ENCODE measurements at regions of chr17 and their contacts with region 1.

Region 1: DNA sequence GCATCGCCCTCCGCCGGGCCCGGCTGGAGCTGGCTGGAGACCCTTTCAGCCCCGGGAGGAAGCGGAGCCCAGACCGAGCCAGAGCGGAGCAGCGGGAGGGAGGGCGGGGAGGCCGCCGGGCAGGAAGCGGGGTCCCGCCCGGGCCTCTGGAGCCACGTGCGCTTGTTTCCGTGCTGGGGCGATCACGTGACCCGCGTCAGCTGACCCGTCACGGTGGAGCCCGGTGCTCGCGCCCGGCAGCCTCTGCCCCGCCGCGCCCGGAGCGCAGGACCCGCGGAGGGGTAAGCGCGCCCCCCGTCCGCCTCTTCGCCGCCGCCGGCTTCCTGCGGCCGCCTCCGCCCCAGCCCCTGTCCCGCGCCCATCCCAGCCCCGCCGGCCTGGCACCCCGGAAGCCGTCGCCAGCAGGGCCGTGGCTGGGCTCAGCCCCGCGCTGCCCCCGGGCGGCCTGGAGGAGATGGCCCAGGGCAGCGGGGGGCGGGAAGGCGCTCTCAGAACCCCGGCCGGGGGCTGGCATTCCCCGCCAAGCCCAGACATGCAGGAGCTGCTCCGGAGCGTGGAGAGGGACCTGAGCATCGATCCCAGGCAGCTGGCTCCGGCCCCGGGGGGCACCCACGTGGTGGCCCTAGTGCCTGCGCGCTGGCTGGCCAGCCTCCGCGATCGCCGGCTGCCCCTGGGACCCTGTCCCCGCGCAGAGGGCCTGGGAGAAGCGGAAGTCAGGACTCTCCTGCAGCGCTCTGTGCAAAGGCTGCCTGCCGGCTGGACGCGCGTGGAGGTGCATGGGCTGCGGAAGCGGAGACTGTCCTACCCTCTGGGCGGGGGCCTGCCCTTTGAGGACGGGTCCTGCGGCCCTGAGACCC is at the start of gene WDR81:
- DNase-seq: peak; percentile 91 to 94
- H3K4me3 ChIP-seq: peak within 1 kb of the TSS; percentile 11 to 63 (median 26)
- H3K27ac ChIP-seq: peak within 1 kb of the TSS; percentile 70 to 91 (median 91)
- H3K4me1 ChIP-seq: peaks cover 14 to 24% of the 10 kb centered on the region in 2 donors
- H3K27me3 ChIP-seq: no peaks in the 10 kb centered on the region
- CTCF ChIP-seq: peak in 2 of 6 experiments; percentile 5 to 11
- POLR2A ChIP-seq: peak in 1 of 2 donors; percentile 57
- total RNA-seq, gene WDR81: 25.6 to 31.0 (median 30.3) TPM

Region 2: DNA sequence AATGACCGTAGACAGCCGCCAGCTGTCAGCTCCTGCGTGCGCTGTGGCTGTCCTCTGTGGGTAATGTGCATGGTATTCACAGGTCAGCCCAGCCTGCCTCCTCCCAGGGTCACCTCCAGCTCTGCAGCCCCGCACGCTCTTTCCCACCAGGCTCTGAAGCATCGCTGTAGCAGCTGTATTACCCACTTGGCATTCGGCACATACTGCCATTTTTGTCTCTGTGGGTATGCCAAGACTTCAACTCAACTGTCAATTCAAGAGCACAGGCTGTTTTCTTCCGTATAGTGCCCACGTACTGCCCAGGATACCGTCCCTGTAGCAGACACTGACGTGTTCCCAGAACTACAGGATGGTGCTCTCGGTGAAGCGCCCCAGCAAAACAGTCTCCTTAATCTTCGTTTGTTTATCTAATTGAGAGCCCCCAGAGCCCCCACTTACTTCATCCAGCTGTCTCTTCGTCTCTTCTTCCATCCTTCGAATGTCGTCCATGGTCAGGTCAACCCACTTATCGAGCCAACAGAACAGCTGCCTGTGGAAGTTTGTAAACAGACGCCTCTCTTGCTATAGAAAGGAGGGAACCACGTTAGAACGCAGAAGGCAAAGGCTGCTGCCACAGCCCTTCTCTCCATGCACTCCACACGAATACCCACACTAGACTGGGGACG is 190.9 kb before region 1 on chr17:
- intact Hi-C with region 1: no loop called
- DNase-seq: no peak
- H3K4me3 ChIP-seq: no peak overlapping the region
- H3K27ac ChIP-seq: no peak overlapping the region
- H3K4me1 ChIP-seq: peaks cover 6 to 8% of the 10 kb centered on the region in 2 donors
- H3K27me3 ChIP-seq: no peaks in the 10 kb centered on the region
- CTCF ChIP-seq: no peak
- POLR2A ChIP-seq: no peak

Region 3: DNA sequence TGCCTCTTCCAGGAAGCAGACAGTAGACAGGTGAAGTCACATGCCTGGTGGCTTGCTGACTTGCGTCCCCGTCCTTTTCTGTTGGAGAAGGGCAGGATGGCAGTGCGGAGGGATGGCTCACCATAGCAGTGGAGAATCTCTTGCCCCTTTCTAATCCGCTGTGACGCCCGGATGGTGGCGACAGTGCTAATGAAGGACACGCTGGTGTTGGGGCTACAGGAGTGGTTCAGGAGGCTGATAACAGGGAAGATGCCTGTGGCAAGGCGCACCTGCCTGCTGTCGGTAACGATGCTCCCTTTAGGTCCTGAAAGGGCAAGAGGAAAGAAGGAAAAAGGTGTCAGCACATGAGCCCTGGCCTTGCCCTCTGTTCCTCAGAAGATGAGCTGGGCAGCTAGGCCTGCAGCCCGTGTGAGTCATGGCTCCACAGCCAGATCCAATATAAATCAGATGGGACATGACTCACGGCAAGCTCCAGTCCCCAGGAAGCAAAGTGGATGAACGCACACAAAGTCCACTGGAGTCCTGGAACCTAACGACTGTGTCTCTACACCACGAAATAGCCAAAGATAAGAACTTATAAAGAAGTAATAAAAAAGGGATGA is 62.7 kb after region 1 on chr17:
- intact Hi-C with region 1: loop called (anchors 5 kb)
- DNase-seq: no peak
- H3K4me3 ChIP-seq: no peak overlapping the region
- H3K27ac ChIP-seq: peak overlapping the region; percentile 85 to 99 (median 98)
- H3K4me1 ChIP-seq: peaks cover 15 to 41% of the 10 kb centered on the region in 2 donors
- H3K27me3 ChIP-seq: no peaks in the 10 kb centered on the region
- CTCF ChIP-seq: no peak
- POLR2A ChIP-seq: no peak

Region 4: DNA sequence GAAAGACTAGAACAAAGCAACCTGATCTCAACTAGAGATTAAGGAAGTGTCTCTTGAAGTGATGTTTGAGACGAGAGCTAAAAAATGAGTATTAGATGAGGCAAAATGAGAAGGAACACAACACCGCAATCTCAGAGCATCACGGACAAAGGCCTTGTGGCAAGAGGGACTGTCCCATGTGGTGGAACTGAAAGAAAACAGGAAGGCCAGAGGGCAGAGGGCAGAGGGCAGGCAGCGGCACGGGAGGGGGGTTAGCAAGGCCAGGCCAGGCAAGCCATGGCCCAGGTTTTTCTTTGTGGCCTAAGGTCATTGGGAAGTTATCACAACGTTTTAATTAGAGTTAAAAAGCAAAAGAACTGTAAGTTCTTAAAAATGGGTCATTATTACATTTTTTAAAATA is 127.6 kb after region 1 on chr17:
- intact Hi-C with region 1: no loop called
- DNase-seq: no peak
- H3K4me3 ChIP-seq: no peak overlapping the region
- H3K27ac ChIP-seq: no peak overlapping the region
- H3K4me1 ChIP-seq: no peaks in the 10 kb centered on the region
- H3K27me3 ChIP-seq: no peaks in the 10 kb centered on the region
- CTCF ChIP-seq: no peak
- POLR2A ChIP-seq: no peak

Region 5: GRCh38 chr17:2041561-2042366 is 317.0 kb after region 1 on chr17 and contains the start of gene OVCA2:
- intact Hi-C with region 1: loop called (anchors 5 kb)
- DNase-seq: peak; percentile 95 to 96
- H3K4me3 ChIP-seq: peak within 1 kb of the TSS; percentile 44 to 90 (median 84)
- H3K27ac ChIP-seq: peak within 1 kb of the TSS; percentile 81 to 91 (median 84)
- H3K4me1 ChIP-seq: peaks cover 16 to 22% of the 10 kb centered on the region in 2 donors
- H3K27me3 ChIP-seq: no peaks in the 10 kb centered on the region
- CTCF ChIP-seq: peak in 3 of 6 experiments; percentile 38 to 65 (median 49)
- POLR2A ChIP-seq: peak in 1 of 2 donors; percentile 85
- total RNA-seq, gene OVCA2: 37.6 to 54.1 (median 47.3) TPM